Prostate gland (tissue), 2 donors: ENCODE measurements at regions of chr15 and their contacts with region 1.

Region 1: GRCh38 chr15:74373731-74374647 is 6.5 kb upstream of the CYP11A1 start:
- DNase-seq: peak; percentile 93
- H3K4me3 ChIP-seq: peak overlapping the region; percentile 43 to 46
- H3K27ac ChIP-seq: peak overlapping the region in 1 of 2 donors; percentile 7
- H3K4me1 ChIP-seq: no peaks in the 10 kb centered on the region
- H3K27me3 ChIP-seq: no peaks in the 10 kb centered on the region
- CTCF ChIP-seq: peak; percentile 59 to 90 (median 80)
- POLR2A ChIP-seq: no peak

Region 2: DNA sequence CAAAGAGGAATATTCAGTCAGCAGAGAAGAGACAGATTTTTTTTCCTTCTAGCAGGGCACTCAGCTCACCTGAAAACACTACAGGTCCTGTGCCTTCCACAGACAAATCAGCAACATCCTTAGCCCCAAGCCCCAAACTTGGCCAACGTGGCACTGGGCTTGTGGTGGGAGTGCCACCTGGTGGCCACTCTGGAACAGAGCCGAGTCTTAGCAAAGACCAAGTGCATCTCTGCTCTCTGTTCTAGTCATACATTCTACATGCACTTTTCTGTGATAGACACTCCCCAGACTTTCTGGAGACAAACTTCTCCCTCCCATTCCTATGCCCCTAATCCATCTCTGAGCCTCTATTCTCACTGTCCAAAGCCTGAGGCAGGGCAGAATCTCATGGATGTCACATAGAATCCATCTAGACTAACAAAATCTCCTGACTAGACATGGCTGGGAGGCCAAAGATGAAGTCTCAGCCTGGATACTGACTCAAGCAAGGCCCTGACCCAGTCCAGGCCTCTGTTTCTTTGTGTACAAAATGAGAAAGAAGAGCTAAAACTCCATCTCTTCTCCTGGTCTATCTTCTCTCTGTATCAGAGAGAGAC is 64.8 kb after region 1 on chr15:
- intact Hi-C with region 1: loop called (anchors 2 kb)
- DNase-seq: peak; percentile 68
- H3K4me3 ChIP-seq: no peak overlapping the region
- H3K27ac ChIP-seq: no peak overlapping the region
- H3K4me1 ChIP-seq: no peaks in the 10 kb centered on the region
- H3K27me3 ChIP-seq: no peaks in the 10 kb centered on the region
- CTCF ChIP-seq: peak; percentile 57 to 91 (median 84)
- POLR2A ChIP-seq: no peak

Region 3: DNA sequence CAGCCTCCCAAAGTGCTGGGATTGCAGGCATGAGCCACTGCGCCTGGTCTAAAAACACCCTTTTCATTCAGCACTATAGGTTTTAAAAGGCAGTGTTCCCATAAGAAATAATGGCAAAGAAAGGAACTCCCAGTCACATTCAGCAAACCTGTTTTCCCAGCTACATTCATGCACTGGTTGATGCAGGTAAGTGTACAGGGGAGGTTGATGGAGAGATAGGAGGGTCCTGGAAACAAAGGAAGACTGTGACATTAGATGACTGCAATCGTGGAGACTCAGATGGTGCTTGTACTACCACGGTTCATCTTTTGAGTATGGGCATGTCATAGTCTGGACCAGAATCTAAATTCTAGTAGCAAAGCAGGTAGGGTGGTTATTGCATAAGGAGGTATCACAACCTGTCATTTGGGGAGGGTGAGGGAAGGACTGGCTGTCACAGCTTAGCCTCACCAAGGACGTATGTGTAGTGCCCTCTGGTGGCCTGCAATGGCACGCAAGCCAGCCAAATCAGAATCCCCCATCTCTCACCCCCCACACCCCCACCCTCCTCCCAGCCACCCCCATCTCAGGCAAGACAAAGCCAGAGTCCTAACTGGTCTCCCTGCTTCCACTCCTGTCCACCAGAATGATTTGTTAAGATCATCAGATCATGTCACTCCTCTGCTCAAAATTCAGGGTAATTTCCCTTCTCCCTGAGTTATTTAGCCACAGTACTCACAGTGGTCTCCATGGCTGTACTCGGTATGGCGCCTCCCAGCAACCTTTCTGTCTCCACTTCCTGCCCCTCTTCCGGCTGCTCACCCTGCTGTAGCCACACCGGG is 115.7 kb after region 1 on chr15:
- intact Hi-C with region 1: loop called (anchors 5 kb)
- DNase-seq: peak; percentile 31
- H3K4me3 ChIP-seq: no peak overlapping the region
- H3K27ac ChIP-seq: no peak overlapping the region
- H3K4me1 ChIP-seq: no peaks in the 10 kb centered on the region
- H3K27me3 ChIP-seq: no peaks in the 10 kb centered on the region
- CTCF ChIP-seq: peak in 3 of 4 experiments; percentile 40 to 61 (median 43)
- POLR2A ChIP-seq: no peak

Region 4: GRCh38 chr15:74615508-74616365 is 241.7 kb after region 1 on chr15 and contains the start of gene CLK3:
- intact Hi-C with region 1: loop called (anchors 5 kb)
- DNase-seq: peak; percentile 95
- H3K4me3 ChIP-seq: peak within 1 kb of the TSS; percentile 98 to 100
- H3K27ac ChIP-seq: peak within 1 kb of the TSS; percentile 95 to 96
- H3K4me1 ChIP-seq: peaks cover 16% of the 10 kb centered on the region
- H3K27me3 ChIP-seq: no peaks in the 10 kb centered on the region
- CTCF ChIP-seq: peak in 1 of 4 experiments; percentile 11
- POLR2A ChIP-seq: peak; percentile 86
- total RNA-seq, gene CLK3: 140 to 180 TPM

Region 5: DNA sequence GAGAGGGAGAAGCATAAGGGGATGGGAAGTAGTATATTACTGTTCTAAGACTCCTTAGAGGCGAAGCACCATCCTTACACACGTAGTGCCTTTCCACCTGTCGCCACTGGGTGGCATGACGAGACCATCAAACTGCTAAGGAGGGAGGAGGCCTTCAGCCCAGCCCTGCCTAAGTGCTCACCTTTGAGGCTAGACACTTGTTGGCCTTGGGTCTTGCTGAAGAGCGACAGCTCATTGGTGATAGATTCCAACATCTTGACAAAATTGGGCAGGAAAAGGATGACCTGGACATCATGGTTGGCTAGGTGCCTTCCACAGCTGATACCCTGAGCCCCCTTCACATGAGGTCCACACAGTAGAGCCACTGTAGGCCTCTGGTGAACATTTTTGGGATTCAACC is 261.2 kb after region 1 on chr15:
- intact Hi-C with region 1: loop called (anchors 5 kb)
- DNase-seq: peak; percentile 62
- H3K4me3 ChIP-seq: no peak overlapping the region
- H3K27ac ChIP-seq: no peak overlapping the region
- H3K4me1 ChIP-seq: peaks cover 6% of the 10 kb centered on the region
- H3K27me3 ChIP-seq: no peaks in the 10 kb centered on the region
- CTCF ChIP-seq: peak; percentile 75 to 94 (median 92)
- POLR2A ChIP-seq: no peak

Region 6: GRCh38 chr15:74768771-74769342 is 394.9 kb after region 1 on chr15:
- intact Hi-C with region 1: loop called (anchors 10 kb)
- DNase-seq: peak; percentile 57
- H3K4me3 ChIP-seq: no peak overlapping the region
- H3K27ac ChIP-seq: no peak overlapping the region
- H3K4me1 ChIP-seq: no peaks in the 10 kb centered on the region
- H3K27me3 ChIP-seq: no peaks in the 10 kb centered on the region
- CTCF ChIP-seq: peak; percentile 75 to 90 (median 86)
- POLR2A ChIP-seq: no peak

Region 7: GRCh38 chr15:74799856-74800547 is 426.0 kb after region 1 on chr15:
- intact Hi-C with region 1: no loop called
- DNase-seq: peak; percentile 69
- H3K4me3 ChIP-seq: no peak overlapping the region
- H3K27ac ChIP-seq: peak overlapping the region; percentile 77 to 83
- H3K4me1 ChIP-seq: peaks cover 19% of the 10 kb centered on the region
- H3K27me3 ChIP-seq: no peaks in the 10 kb centered on the region
- CTCF ChIP-seq: peak; percentile 94 to 99 (median 96)
- POLR2A ChIP-seq: no peak

Region 8: DNA sequence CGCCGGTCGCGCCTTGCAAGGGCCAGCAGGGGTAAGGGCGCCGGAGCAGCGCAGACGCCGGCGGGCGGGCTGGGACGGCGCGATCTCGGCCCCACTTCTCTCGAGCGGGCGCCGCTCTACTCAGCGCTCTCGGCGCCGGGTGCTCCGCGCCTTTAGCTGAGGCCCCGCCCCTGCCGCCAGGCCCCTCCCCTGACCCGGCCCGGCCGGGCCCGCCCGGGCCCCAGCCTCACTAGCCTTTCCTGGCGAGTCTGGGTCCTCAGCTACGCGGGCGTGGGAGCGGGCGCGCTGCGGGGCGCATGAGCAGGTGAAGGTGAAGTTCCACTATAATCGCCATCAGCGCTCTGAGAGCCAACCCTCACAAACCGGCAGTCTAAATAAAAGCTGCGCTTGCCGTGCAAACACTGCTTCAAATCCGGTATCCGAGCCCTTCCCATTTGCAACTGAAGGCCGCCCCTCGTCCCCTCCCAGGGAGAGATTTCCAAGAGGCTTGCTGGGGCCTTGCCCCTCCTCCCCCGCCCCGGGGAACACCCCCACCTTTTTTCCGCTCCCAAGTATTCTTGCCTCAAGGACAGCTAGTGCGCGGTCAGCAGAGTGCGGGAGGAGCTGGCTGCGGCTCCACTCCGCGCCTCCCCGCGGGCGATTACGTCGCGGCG is 582.8 kb after region 1 on chr15 and contains the start of gene RPP25:
- intact Hi-C with region 1: loop called (anchors 10 kb)
- DNase-seq: peak; percentile 65
- H3K4me3 ChIP-seq: peak within 1 kb of the TSS; percentile 44 to 45
- H3K27ac ChIP-seq: peak within 1 kb of the TSS; percentile 48 to 62
- H3K4me1 ChIP-seq: peaks cover 9% of the 10 kb centered on the region
- H3K27me3 ChIP-seq: no peaks in the 10 kb centered on the region
- CTCF ChIP-seq: no peak
- POLR2A ChIP-seq: peak; percentile 54
- total RNA-seq, gene RPP25: 3.8 to 17.6 TPM